ENCODE measurements at regions of chr3 and their contacts with region 1.

Region 1: GRCh38 chr3:195863121-195864006 is 45.0 kb downstream of the TNK2 start:
- DNase-seq: peak; percentile 87 to 94 (median 92)
- ATAC-seq: peak; percentile 93 to 98 (median 96)
- H3K4me3 ChIP-seq: no peak overlapping the region
- H3K27ac ChIP-seq: peak overlapping the region in 9 of 12 donors; percentile 33 to 70 (median 61)
- H3K4me1 ChIP-seq: peaks cover 0 to 25% (median 13%) of the 10 kb centered on the region in 12 donors
- H3K27me3 ChIP-seq: no peaks in the 10 kb centered on the region
- CTCF ChIP-seq: peak; percentile 92 to 99 (median 97)
- POLR2A ChIP-seq: no peak

Region 2: GRCh38 chr3:195894780-195895607 is 31.6 kb after region 1 on chr3:
- intact Hi-C with region 1: loop called (anchors 1 to 2 kb)
- DNase-seq: peak in 3 of 5 donors; percentile 42 to 62 (median 55)
- ATAC-seq: peak in 3 of 4 donors; percentile 21 to 40 (median 33)
- H3K4me3 ChIP-seq: peak overlapping the region; percentile 47 to 81 (median 68)
- H3K27ac ChIP-seq: peak overlapping the region; percentile 74 to 96 (median 92)
- H3K4me1 ChIP-seq: peaks cover 7 to 70% (median 54%) of the 10 kb centered on the region in 12 donors
- H3K27me3 ChIP-seq: no peaks in the 10 kb centered on the region
- CTCF ChIP-seq: peak; percentile 84 to 95 (median 92)
- POLR2A ChIP-seq: no peak

Region 3: GRCh38 chr3:195916291-195916690 is 52.9 kb after region 1 on chr3:
- intact Hi-C with region 1: loop called in 9 of 10 experiments (anchors 1 to 2 kb)
- DNase-seq: peak in 1 of 5 donors; percentile 15
- ATAC-seq: no peak
- H3K4me3 ChIP-seq: no peak overlapping the region
- H3K27ac ChIP-seq: no peak overlapping the region
- H3K4me1 ChIP-seq: peaks cover 0 to 10% (median 5%) of the 10 kb centered on the region in 12 donors
- H3K27me3 ChIP-seq: peaks cover 0 to 17% (median 0%) of the 10 kb centered on the region in 9 donors
- CTCF ChIP-seq: no peak
- POLR2A ChIP-seq: no peak

Measured in heart left ventricle (tissue), 16 donors.